Naive thymus-derived CD4-positive, alpha-beta T cell (primary cell): ENCODE measurements at regions of chr5 and their contacts with region 1.

Region 1: DNA sequence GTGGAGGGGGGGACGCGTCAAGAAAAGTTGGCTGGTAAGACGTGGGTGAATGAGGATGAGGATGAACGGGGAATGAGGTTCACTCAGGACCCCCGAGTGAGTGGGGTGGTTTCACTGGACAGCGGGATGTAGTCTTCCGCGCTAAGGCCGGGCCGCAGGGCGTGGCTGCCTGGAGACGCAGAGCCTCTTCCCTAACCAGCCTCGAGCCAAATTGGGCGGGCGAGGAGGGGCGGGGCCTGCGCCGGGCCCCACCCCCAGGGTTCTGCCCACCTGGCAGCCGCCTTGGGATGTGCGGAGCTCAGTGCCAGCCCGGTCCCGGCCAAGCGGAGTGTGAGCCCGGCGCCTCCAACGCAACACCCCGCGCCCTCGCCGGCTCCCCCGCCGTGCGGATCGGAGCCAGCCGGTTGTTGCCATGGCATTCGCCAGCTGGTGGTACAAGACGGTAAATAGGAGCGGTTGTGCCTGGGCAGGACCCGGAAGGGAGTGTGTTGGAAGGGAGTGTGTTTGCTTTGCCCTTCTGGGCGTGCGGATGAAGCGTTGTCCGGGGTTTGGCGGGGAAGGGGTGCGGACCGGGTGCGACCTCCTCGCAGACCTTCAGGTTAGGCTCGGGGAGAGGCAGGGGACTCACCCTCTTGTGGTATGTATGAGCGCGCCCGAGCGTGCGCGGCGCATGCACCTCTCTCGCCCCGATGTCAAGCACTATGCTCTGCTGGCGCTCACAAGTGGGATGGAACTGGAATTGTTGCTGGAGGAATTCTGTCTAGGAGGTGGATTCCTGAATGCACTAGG is 743 bp downstream of the CAST start:
- DNase-seq: peak; percentile 72 to 90 (median 82)
- ATAC-seq: peak; percentile 84
- H3K4me3 ChIP-seq: peak overlapping the region; percentile 86
- H3K4me3 Mint-ChIP-seq: peak overlapping the region; percentile 86 to 100 (median 95)
- H3K27ac ChIP-seq: peak overlapping the region; percentile 87
- H3K27ac Mint-ChIP-seq: peak overlapping the region; percentile 76 to 99 (median 95)
- H3K4me1 ChIP-seq: peaks cover 20 to 26% of the 10 kb centered on the region in 2 donors
- H3K4me1 Mint-ChIP-seq: peaks cover 30 to 64% (median 50%) of the 10 kb centered on the region in 7 donors
- H3K27me3 ChIP-seq: no peaks in the 10 kb centered on the region
- H3K27me3 Mint-ChIP-seq: peaks cover 0 to 14% (median 0%) of the 10 kb centered on the region in 5 donors

Region 2: DNA sequence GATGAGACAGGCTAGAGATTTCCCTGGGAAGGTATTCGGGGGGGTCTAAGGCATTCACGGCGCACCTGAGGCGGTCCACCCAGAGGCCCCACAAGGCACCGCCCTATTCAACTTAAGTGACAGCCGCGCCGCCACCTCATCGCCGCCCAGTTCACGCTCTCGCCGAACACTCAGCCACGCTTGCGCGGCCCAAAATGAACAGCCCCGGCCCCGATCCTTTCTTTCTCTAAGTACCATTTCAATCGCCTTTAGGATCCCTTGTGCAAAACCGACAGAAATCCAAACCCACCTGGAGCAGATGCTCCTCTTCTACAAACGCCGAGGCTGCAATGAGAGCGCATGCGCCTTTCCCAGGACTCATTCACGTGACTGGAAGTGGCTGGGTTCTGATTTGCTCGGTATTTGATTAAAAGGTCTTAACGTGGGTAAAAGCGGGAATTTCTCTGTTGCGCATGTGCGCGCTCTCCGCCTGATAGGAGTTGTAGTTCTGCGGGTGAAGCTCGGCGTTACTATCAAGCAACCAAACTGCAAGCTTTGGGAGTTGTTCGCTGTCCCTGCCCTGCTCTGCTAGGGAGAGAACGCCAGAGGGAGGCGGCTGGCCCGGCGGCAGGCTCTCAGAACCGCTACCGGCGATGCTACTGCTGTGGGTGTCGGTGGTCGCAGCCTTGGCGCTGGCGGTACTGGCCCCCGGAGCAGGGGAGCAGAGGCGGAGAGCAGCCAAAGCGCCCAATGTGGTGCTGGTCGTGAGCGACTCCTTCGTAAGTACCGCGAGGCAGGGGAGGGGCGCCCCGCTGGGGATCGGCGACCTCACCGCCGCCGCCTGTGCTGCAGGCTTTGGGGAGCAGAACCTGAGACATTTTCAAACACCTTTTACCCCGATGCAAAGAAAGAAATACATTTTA is 1108.0 kb before region 1 on chr5 and contains the starts of genes ARSK and SKIC3:
- CTCF ChIA-PET with region 1: no interaction called
- POLR2A ChIA-PET with region 1: no interaction called
- intact Hi-C with region 1: loop called (anchors 1 kb)
- DNase-seq: peak; percentile 76 to 98 (median 97)
- ATAC-seq: peak; percentile 93
- H3K4me3 ChIP-seq: peak within 1 kb of the TSS; percentile 71
- H3K4me3 Mint-ChIP-seq: peak within 1 kb of the TSS; percentile 90 to 100 (median 96)
- H3K27ac ChIP-seq: peak within 1 kb of the TSS; percentile 83
- H3K27ac Mint-ChIP-seq: peak within 1 kb of the TSS; percentile 92 to 98 (median 94)
- H3K4me1 ChIP-seq: peaks cover 20 to 27% of the 10 kb centered on the region in 2 donors
- H3K4me1 Mint-ChIP-seq: peaks cover 26 to 66% (median 47%) of the 10 kb centered on the region in 7 donors
- H3K27me3 ChIP-seq: no peaks in the 10 kb centered on the region
- H3K27me3 Mint-ChIP-seq: peaks cover 0 to 2% (median 0%) of the 10 kb centered on the region in 5 donors
- total RNA-seq, gene ARSK: 2.5 to 8.5 (median 4.5) TPM
- total RNA-seq, gene SKIC3: 74.6 to 103 (median 81.0) TPM

Region 3: DNA sequence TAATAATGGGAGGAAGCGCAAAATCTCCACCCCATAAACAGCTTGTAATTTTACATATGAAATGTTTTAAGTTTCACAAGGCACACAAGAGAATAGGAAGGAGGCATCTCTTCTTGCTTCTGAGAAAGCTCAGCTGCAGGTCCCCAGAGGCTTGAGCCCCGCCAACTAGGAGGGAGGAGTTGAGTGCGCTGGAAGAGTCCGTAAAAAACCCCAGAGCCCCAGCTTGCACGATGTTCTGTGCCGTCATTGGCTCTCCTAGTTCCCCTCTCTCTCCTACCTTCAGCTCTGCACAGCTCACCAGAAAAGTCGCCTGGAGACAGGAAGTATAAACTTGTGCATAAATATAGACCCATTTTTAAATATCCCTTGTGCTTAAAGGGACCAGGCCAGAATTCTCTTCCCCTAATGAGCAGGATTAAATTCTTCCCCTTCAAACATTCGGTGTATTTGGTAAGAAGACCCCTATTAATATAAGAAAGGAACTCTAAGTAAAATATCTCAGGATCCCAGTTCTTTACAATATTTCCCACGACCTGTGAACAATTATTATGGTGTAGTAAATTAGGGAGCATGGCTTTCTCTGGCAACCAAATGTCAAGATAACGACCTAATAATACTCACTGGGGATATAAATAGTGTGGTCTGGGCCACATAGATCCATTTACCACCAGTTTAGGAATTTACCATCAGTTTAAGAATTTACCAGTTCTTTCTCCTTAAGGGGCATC is 854.1 kb before region 1 on chr5:
- CTCF ChIA-PET with region 1: no interaction called
- POLR2A ChIA-PET with region 1: no interaction called
- intact Hi-C with region 1: loop called in 1 of 2 experiments (anchors 5 kb)
- DNase-seq: peak; percentile 54 to 92 (median 88)
- ATAC-seq: peak; percentile 100
- H3K4me3 ChIP-seq: peak overlapping the region; percentile 24
- H3K4me3 Mint-ChIP-seq: peak overlapping the region; percentile 21 to 84 (median 76)
- H3K27ac ChIP-seq: peak overlapping the region; percentile 75
- H3K27ac Mint-ChIP-seq: peak overlapping the region; percentile 76 to 98 (median 90)
- H3K4me1 ChIP-seq: peaks cover 31 to 49% of the 10 kb centered on the region in 2 donors
- H3K4me1 Mint-ChIP-seq: peaks cover 53 to 71% (median 64%) of the 10 kb centered on the region in 7 donors
- H3K27me3 ChIP-seq: no peaks in the 10 kb centered on the region
- H3K27me3 Mint-ChIP-seq: no peaks in the 10 kb centered on the region

Region 4: GRCh38 chr5:96344678-96345577 is 318.0 kb before region 1 on chr5:
- CTCF ChIA-PET with region 1: no interaction called
- POLR2A ChIA-PET with region 1: no interaction called
- intact Hi-C with region 1: loop called in 1 of 2 experiments (anchors 2 kb)
- DNase-seq: peak in 7 of 9 donors; percentile 33 to 70 (median 59)
- ATAC-seq: peak; percentile 91
- H3K4me3 ChIP-seq: no peak overlapping the region
- H3K4me3 Mint-ChIP-seq: peak overlapping the region; percentile 1 to 72 (median 48)
- H3K27ac ChIP-seq: no peak overlapping the region
- H3K27ac Mint-ChIP-seq: peak overlapping the region in 6 of 9 donors; percentile 3 to 53 (median 10)
- H3K4me1 ChIP-seq: peaks cover 6 to 7% of the 10 kb centered on the region in 2 donors
- H3K4me1 Mint-ChIP-seq: peaks cover 5 to 21% (median 18%) of the 10 kb centered on the region in 7 donors
- H3K27me3 ChIP-seq: no peaks in the 10 kb centered on the region
- H3K27me3 Mint-ChIP-seq: peaks cover 0 to 38% (median 8%) of the 10 kb centered on the region in 5 donors

Region 5: GRCh38 chr5:96388176-96388575 is 274.7 kb before region 1 on chr5:
- CTCF ChIA-PET with region 1: no interaction called
- POLR2A ChIA-PET with region 1: no interaction called
- intact Hi-C with region 1: no loop called
- DNase-seq: no peak
- ATAC-seq: no peak
- H3K4me3 ChIP-seq: no peak overlapping the region
- H3K4me3 Mint-ChIP-seq: no peak overlapping the region
- H3K27ac ChIP-seq: no peak overlapping the region
- H3K27ac Mint-ChIP-seq: peak overlapping the region in 1 of 9 donors; percentile 25
- H3K4me1 ChIP-seq: no peaks in the 10 kb centered on the region
- H3K4me1 Mint-ChIP-seq: no peaks in the 10 kb centered on the region
- H3K27me3 ChIP-seq: no peaks in the 10 kb centered on the region
- H3K27me3 Mint-ChIP-seq: peaks cover 13 to 25% (median 16%) of the 10 kb centered on the region in 5 donors

Region 6: GRCh38 chr5:96651948-96652753 is 10.8 kb before region 1 on chr5:
- CTCF ChIA-PET with region 1: interaction called, 5 read pairs
- POLR2A ChIA-PET with region 1: interaction called, 7 read pairs
- intact Hi-C with region 1: loop called (anchors 1 kb)
- DNase-seq: no peak
- ATAC-seq: peak; percentile 46
- H3K4me3 ChIP-seq: no peak overlapping the region
- H3K4me3 Mint-ChIP-seq: no peak overlapping the region
- H3K27ac ChIP-seq: no peak overlapping the region
- H3K27ac Mint-ChIP-seq: no peak overlapping the region
- H3K4me1 ChIP-seq: peaks cover 0 to 10% of the 10 kb centered on the region in 2 donors
- H3K4me1 Mint-ChIP-seq: peaks cover 0 to 30% (median 0%) of the 10 kb centered on the region in 7 donors
- H3K27me3 ChIP-seq: no peaks in the 10 kb centered on the region
- H3K27me3 Mint-ChIP-seq: peaks cover 8 to 70% (median 17%) of the 10 kb centered on the region in 5 donors

Region 7: GRCh38 chr5:96807075-96807654 is 144.2 kb after region 1 on chr5:
- CTCF ChIA-PET with region 1: no interaction called
- POLR2A ChIA-PET with region 1: interaction called, 10 read pairs
- intact Hi-C with region 1: loop called (anchors 1 to 2 kb)
- DNase-seq: peak in 1 of 9 donors; percentile 67
- ATAC-seq: peak; percentile 17
- H3K4me3 ChIP-seq: peak overlapping the region; percentile 85
- H3K4me3 Mint-ChIP-seq: peak overlapping the region; percentile 90 to 100 (median 96)
- H3K27ac ChIP-seq: peak overlapping the region; percentile 99
- H3K27ac Mint-ChIP-seq: peak overlapping the region; percentile 98 to 100 (median 99)
- H3K4me1 ChIP-seq: peaks cover 40 to 69% of the 10 kb centered on the region in 2 donors
- H3K4me1 Mint-ChIP-seq: peaks cover 57 to 92% (median 89%) of the 10 kb centered on the region in 7 donors
- H3K27me3 ChIP-seq: no peaks in the 10 kb centered on the region
- H3K27me3 Mint-ChIP-seq: peaks cover 0 to 2% (median 0%) of the 10 kb centered on the region in 5 donors

Region 8: GRCh38 chr5:97162045-97162444 is 499.1 kb after region 1 on chr5:
- CTCF ChIA-PET with region 1: no interaction called
- POLR2A ChIA-PET with region 1: no interaction called
- intact Hi-C with region 1: loop called in 1 of 2 experiments (anchors 5 kb)
- DNase-seq: peak in 7 of 9 donors; percentile 23 to 64 (median 45)
- ATAC-seq: peak; percentile 62
- H3K4me3 ChIP-seq: no peak overlapping the region
- H3K4me3 Mint-ChIP-seq: no peak overlapping the region
- H3K27ac ChIP-seq: no peak overlapping the region
- H3K27ac Mint-ChIP-seq: no peak overlapping the region
- H3K4me1 ChIP-seq: no peaks in the 10 kb centered on the region
- H3K4me1 Mint-ChIP-seq: peaks cover 0 to 17% (median 11%) of the 10 kb centered on the region in 7 donors
- H3K27me3 ChIP-seq: no peaks in the 10 kb centered on the region
- H3K27me3 Mint-ChIP-seq: peaks cover 0 to 4% (median 0%) of the 10 kb centered on the region in 5 donors